ENCODE measurements at regions of chr17 and their contacts with region 1.

Region 1: DNA sequence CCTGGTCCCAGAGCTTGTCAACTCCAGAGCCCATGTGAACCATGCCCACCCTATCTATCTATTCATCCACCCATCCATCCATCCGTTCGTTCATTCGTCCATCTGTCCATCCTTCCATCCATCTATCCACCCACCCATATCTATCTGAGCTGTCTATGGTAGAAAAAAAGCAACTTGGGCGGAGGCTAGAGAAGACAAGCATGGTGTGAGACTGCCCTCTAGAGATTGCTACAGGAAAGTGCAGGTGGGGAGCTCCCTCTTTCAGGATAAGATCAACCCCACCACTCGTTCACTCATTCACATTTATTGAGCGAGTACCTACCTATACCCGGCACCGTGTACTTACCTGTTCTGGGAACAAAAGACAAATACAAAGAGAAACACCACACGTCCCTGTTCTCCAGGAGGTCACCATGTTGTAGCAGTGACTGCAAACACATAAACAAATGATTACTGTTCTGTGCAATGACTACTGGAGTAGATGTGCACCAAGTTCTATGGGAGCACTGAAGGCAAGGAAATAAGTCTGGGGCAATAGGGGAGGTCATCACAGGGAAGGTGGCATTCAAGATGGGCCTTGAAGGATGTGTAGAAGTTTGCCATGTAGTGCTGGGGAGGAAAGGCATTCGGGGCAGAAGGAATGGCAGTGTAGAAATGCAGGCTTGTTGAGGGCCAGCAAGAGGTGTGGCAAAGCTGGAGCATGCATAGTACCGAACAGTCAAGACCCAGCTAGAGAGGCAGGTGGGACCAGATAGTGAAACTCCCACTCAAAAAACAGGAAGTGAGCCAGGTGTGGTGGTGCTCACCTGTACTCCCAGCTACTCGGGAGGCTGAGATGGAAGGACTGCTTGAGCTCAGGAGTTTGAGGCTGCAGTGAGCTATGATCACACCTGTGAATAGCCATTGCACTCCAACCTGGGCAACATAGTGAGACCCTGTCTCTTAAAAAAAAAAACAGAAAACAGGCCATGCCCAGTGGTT is 13.4 kb upstream of the ATP5MC1 start:
- DNase-seq: peak; percentile 69
- ATAC-seq: peak; percentile 98
- H3K4me3 Mint-ChIP-seq: no peak overlapping the region
- H3K27ac Mint-ChIP-seq: no peak overlapping the region
- H3K4me1 Mint-ChIP-seq: no peaks in the 10 kb centered on the region
- H3K27me3 Mint-ChIP-seq: peaks cover 3% of the 10 kb centered on the region
- CTCF ChIP-seq: peak; percentile 94

Region 2: DNA sequence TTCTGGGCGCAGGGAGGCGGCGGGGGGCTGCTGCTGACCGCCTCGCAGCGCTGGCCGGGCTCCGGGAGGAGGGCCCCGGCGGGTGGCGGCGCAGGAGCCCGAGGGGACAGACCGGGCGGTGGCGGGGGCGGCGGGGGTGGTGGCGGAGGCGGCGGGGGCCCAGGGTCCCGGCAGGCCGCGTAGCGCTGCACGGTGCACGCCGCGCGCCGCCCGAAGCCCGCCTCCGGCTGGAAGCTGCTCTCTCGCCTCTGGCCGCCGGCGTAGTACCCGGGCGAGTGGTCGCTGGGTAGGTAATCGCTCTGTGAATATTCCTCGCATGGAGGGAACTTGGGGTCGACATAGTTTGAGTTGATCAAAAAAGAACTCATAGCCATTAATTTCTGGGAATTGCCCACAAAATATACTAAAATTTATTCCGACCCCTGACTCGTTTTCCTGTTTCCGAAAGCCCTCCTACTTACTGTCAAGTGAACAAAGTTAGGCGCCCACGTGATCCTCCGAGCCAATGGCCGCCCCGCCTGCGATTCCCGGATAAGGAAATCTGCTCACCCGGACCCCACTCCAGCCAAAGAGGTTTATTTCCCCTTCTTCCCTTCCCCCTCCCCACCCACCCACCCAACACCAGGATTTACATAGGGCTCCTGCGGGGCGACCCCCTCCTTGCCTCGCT is 301.1 kb before region 1 on chr17 and contains the start of gene HOXB4:
- CTCF ChIA-PET with region 1: no interaction called
- POLR2A ChIA-PET with region 1: no interaction called
- intact Hi-C with region 1: no loop called
- DNase-seq: peak; percentile 84
- ATAC-seq: peak; percentile 76
- H3K4me3 Mint-ChIP-seq: peak within 1 kb of the TSS; percentile 85
- H3K27ac Mint-ChIP-seq: peak within 1 kb of the TSS; percentile 72
- H3K4me1 Mint-ChIP-seq: peaks cover 40% of the 10 kb centered on the region
- H3K27me3 Mint-ChIP-seq: peaks cover 42% of the 10 kb centered on the region
- CTCF ChIP-seq: no peak
- total RNA-seq, gene HOXB4: 1.7 to 2.0 TPM

Region 3: GRCh38 chr17:48671697-48672171 is 207.5 kb before region 1 on chr17:
- CTCF ChIA-PET with region 1: interaction called, 21 read pairs
- POLR2A ChIA-PET with region 1: no interaction called
- intact Hi-C with region 1: no loop called
- DNase-seq: peak; percentile 80
- ATAC-seq: peak; percentile 79
- H3K4me3 Mint-ChIP-seq: peak overlapping the region; percentile 49
- H3K27ac Mint-ChIP-seq: no peak overlapping the region
- H3K4me1 Mint-ChIP-seq: peaks cover 5% of the 10 kb centered on the region
- H3K27me3 Mint-ChIP-seq: peaks cover 35% of the 10 kb centered on the region
- CTCF ChIP-seq: peak; percentile 95

Region 4: GRCh38 chr17:48799069-48799723 is 80.0 kb before region 1 on chr17:
- CTCF ChIA-PET with region 1: interaction called, 614 read pairs
- POLR2A ChIA-PET with region 1: interaction called, 4 read pairs
- intact Hi-C with region 1: loop called (anchors 1 kb)
- DNase-seq: no peak
- ATAC-seq: no peak
- H3K4me3 Mint-ChIP-seq: no peak overlapping the region
- H3K27ac Mint-ChIP-seq: no peak overlapping the region
- H3K4me1 Mint-ChIP-seq: no peaks in the 10 kb centered on the region
- H3K27me3 Mint-ChIP-seq: peaks cover 17% of the 10 kb centered on the region
- CTCF ChIP-seq: no peak

Region 5: GRCh38 chr17:48830840-48831548 is 48.2 kb before region 1 on chr17 and contains the start of gene CALCOCO2:
- CTCF ChIA-PET with region 1: interaction called, 42 read pairs
- POLR2A ChIA-PET with region 1: interaction called, 3 read pairs
- intact Hi-C with region 1: no loop called
- DNase-seq: peak; percentile 95
- ATAC-seq: peak; percentile 96
- H3K4me3 Mint-ChIP-seq: peak within 1 kb of the TSS; percentile 98
- H3K27ac Mint-ChIP-seq: peak within 1 kb of the TSS; percentile 97
- H3K4me1 Mint-ChIP-seq: peaks cover 41% of the 10 kb centered on the region
- H3K27me3 Mint-ChIP-seq: no peaks in the 10 kb centered on the region
- CTCF ChIP-seq: no peak
- total RNA-seq, gene CALCOCO2: 69.2 to 73.1 TPM

Region 6: GRCh38 chr17:48850792-48851323 is 28.4 kb before region 1 on chr17:
- CTCF ChIA-PET with region 1: interaction called, 21 read pairs
- POLR2A ChIA-PET with region 1: no interaction called
- intact Hi-C with region 1: no loop called
- DNase-seq: no peak
- ATAC-seq: peak; percentile 13
- H3K4me3 Mint-ChIP-seq: no peak overlapping the region
- H3K27ac Mint-ChIP-seq: no peak overlapping the region
- H3K4me1 Mint-ChIP-seq: peaks cover 5% of the 10 kb centered on the region
- H3K27me3 Mint-ChIP-seq: no peaks in the 10 kb centered on the region
- CTCF ChIP-seq: no peak

Region 7: GRCh38 chr17:49031965-49032928 is 153.0 kb after region 1 on chr17:
- CTCF ChIA-PET with region 1: interaction called, 23 read pairs
- POLR2A ChIA-PET with region 1: no interaction called
- intact Hi-C with region 1: no loop called
- DNase-seq: peak; percentile 60
- ATAC-seq: peak; percentile 91
- H3K4me3 Mint-ChIP-seq: no peak overlapping the region
- H3K27ac Mint-ChIP-seq: no peak overlapping the region
- H3K4me1 Mint-ChIP-seq: no peaks in the 10 kb centered on the region
- H3K27me3 Mint-ChIP-seq: no peaks in the 10 kb centered on the region
- CTCF ChIP-seq: peak; percentile 79